ENCODE measurements at regions of chr3 and their contacts with region 1.

Region 1: GRCh38 chr3:43670635-43671522 is 19.9 kb upstream of the ABHD5 start:
- DNase-seq: no peak
- H3K4me3 ChIP-seq: no peak overlapping the region
- H3K4me3 Mint-ChIP-seq: no peak overlapping the region
- H3K27ac ChIP-seq: peak overlapping the region; percentile 52
- H3K27ac Mint-ChIP-seq: no peak overlapping the region
- H3K4me1 ChIP-seq: no peaks in the 10 kb centered on the region
- H3K4me1 Mint-ChIP-seq: no peaks in the 10 kb centered on the region
- H3K27me3 ChIP-seq: no peaks in the 10 kb centered on the region
- H3K27me3 Mint-ChIP-seq: peaks cover 2 to 43% of the 10 kb centered on the region in 2 donors

Region 2: DNA sequence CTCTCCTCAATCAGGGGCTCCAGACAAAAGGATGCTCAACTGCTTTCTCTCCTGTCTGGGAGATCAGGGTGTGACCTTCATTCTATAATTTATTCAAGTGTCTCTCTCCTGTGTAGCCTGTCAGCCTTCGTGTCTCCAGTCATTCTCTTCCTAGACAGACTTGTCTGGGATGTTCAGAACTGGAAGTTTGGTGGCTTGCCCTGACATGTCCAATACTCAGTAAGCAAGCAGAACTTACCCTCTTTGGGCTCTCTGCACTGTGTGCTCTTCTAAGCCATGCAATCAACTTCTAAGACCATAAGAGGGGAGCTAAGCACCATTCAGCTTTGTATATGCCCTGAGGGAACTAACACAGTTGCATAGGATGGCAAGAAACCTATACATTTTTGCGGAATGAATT is 847.5 kb before region 1 on chr3:
- CTCF ChIA-PET with region 1: no interaction called
- POLR2A ChIA-PET with region 1: interaction called, 14 read pairs
- DNase-seq: no peak
- H3K4me3 ChIP-seq: no peak overlapping the region
- H3K4me3 Mint-ChIP-seq: no peak overlapping the region
- H3K27ac ChIP-seq: no peak overlapping the region
- H3K27ac Mint-ChIP-seq: no peak overlapping the region
- H3K4me1 ChIP-seq: no peaks in the 10 kb centered on the region
- H3K4me1 Mint-ChIP-seq: no peaks in the 10 kb centered on the region
- H3K27me3 ChIP-seq: peaks cover 4% of the 10 kb centered on the region
- H3K27me3 Mint-ChIP-seq: peaks cover 18 to 48% of the 10 kb centered on the region in 2 donors

Measured in CD8-positive, alpha-beta memory T cell (primary cell).